Activated T-helper 1 cell treated with anti-CD3 and anti-CD28 coated beads, Interleukin-12 subunit alpha, Interleukin-12 subunit beta, Interleukin-2, Interleukin-4 antibody, amounts not matched to agents 30 ng/mL and 10 ng/mL and 1 ng/mL, durations not matched to agents 14 hours and 24 hours and 36 hours (primary cell): ENCODE measurements at regions of chr20 and their contacts with region 1.

Region 1: GRCh38 chr20:23235173-23236027 is 115.2 kb upstream of the NXT1 start:
- DNase-seq: peak; percentile 27
- H3K4me3 Mint-ChIP-seq: no peak overlapping the region
- H3K27ac Mint-ChIP-seq: no peak overlapping the region
- H3K4me1 Mint-ChIP-seq: no peaks in the 10 kb centered on the region
- H3K27me3 Mint-ChIP-seq: peaks cover 15% of the 10 kb centered on the region

Region 2: GRCh38 chr20:22339091-22339881 is 896.1 kb before region 1 on chr20:
- intact Hi-C with region 1: loop called (anchors 1 kb)
- DNase-seq: no peak
- H3K4me3 Mint-ChIP-seq: no peak overlapping the region
- H3K27ac Mint-ChIP-seq: no peak overlapping the region
- H3K4me1 Mint-ChIP-seq: no peaks in the 10 kb centered on the region
- H3K27me3 Mint-ChIP-seq: peaks cover 3% of the 10 kb centered on the region

Region 3: GRCh38 chr20:22691369-22692118 is 543.9 kb before region 1 on chr20:
- intact Hi-C with region 1: loop called (anchors 1 kb)
- DNase-seq: peak; percentile 33
- H3K4me3 Mint-ChIP-seq: no peak overlapping the region
- H3K27ac Mint-ChIP-seq: no peak overlapping the region
- H3K4me1 Mint-ChIP-seq: no peaks in the 10 kb centered on the region
- H3K27me3 Mint-ChIP-seq: peaks cover 2% of the 10 kb centered on the region

Region 4: DNA sequence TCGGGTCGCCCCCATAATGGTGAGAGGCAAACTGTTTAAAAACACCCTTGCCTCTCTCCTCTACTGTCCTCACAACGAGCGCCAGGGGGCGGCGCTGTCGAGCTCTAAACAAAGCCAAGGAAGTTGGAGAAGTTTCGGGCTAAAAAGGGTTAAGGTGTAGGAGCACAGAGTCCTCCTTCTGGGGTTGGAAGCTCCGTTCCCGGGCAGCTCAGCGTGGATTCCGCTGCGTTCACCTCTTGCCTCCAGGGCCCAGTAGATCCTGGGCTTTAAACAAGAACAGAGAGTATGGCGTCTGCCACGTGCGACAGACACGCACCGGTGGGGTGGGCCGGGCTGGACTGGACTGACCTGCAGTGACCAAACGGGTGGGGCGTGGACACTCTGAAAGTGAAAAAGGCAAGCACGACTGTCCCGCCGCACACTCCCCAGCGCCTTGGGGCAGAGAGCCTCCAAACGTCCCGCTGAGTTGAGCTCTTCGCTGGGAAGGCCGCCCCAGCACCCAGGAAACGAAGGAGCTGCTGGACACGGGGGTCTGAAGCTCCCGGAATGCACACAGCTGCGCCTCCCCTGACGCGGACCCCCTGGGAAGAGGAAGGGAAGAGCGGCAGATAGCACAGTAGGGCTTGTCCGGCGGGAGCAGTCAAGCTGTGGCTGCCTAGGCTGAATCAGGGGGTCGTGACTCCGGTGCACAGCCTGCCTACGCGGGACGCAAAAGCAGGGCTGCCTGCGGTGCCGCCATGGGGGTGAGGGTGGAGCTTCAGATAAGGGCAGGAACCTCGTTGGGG is 184.4 kb before region 1 on chr20:
- intact Hi-C with region 1: loop called (anchors 1 kb)
- DNase-seq: no peak
- H3K4me3 Mint-ChIP-seq: no peak overlapping the region
- H3K27ac Mint-ChIP-seq: no peak overlapping the region
- H3K4me1 Mint-ChIP-seq: no peaks in the 10 kb centered on the region
- H3K27me3 Mint-ChIP-seq: peaks cover 64% of the 10 kb centered on the region

Region 5: DNA sequence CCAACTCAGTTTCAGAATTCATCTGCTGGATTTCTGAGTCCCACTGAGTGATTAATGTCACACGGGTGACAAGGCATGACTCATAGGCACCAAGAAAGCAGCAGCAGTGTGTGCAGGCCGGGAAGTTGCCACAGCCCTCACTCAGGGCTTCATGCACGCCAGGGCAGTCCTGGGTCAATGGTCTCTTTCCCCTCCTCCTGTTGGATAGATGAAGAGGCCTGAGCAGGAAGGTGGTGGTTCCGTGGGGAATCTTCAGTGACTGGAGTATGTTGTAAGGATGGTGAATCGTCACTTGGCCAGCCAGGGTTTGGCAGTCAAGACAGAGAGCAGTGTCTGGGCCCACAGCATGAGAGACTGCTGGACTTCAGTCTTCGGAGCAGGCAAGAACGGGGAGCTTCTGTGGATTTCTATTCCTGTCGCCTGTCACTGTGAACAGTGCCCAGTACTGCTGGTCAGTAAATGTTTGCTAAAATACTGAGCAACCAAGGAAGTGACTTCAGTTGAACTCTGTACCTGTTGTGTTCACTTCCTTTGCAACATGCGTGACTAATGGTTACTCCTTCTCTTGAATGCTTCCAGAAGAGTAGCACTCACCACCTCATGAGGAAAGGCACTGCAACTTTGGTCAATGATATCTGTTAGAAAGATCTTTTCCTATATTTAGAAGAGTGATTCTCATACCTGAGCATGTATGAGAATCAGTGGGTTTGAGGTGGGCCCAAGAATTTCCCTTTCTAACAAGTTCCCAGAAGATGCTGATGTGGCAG is 87.3 kb before region 1 on chr20:
- intact Hi-C with region 1: loop called (anchors 5 kb)
- DNase-seq: peak; percentile 35
- H3K4me3 Mint-ChIP-seq: peak overlapping the region; percentile 35
- H3K27ac Mint-ChIP-seq: peak overlapping the region; percentile 90
- H3K4me1 Mint-ChIP-seq: peaks cover 80% of the 10 kb centered on the region
- H3K27me3 Mint-ChIP-seq: peaks cover 12% of the 10 kb centered on the region